Psoas muscle (tissue), 8 donors: ENCODE measurements at regions of chr9 and their contacts with region 1.

Region 1: DNA sequence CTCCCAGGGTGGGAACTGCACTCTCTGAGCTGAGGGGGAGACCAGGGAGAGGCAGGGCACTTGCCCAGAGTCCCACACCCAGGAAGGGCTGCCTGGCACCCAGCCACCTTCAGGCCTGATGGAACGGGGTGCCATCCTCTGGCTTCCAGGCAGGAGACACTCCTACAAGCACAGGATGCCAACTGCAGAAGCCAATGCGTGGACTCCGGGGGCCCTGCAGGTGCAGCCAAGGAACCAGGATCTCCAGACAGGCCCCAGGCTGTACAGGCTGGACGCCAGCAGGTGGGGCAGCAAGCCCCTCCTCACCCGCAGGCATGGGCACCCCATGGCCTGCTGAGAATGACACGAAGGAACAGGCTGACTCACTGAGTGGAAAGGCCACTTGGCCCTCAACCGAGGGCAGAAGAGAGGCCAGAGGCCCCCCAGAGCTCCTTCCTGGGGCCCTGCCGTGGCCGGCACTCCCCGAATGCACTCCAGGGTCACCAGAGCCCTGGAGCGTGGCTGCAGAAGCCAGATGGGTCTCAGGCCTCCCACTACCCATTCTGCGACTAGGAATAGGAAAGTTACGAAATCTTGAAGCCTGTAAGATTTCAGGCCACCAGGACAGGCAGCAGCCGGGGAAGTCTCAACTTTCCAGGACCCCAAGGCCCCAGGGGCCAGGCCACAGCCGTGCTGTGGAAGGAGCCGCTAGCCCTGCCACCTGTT is 15.7 kb downstream of the NACC2 start:
- DNase-seq: peak in 1 of 2 donors; percentile 66
- ATAC-seq: peak; percentile 12 to 64 (median 40)
- H3K4me3 ChIP-seq: peak overlapping the region; percentile 16
- H3K27ac ChIP-seq: peak overlapping the region; percentile 78
- H3K4me1 ChIP-seq: peaks cover 50% of the 10 kb centered on the region
- H3K27me3 ChIP-seq: no peaks in the 10 kb centered on the region
- CTCF ChIP-seq: no peak

Region 2: DNA sequence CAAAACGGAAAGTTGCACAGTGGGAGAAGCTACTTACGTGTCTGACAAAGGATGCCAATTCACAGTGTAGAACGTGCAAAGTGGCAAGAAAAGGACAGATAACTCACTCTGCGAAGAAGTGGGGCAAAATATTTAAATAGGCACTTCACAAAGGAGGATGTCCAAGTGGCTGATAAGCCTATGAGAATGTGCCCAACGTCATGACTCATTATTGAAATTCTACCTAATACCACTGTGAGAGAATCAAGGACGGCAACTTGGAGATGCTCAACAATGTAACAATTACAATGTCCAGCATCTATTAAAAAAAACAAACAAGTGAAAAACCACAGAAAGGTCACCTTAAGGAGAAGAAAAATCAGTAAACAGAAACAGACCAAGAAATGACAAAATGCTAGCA is 43.3 kb before region 1 on chr9:
- intact Hi-C with region 1: loop called (anchors 5 kb)
- DNase-seq: no peak
- ATAC-seq: peak in 2 of 4 donors; percentile 58 to 73
- H3K4me3 ChIP-seq: no peak overlapping the region
- H3K27ac ChIP-seq: no peak overlapping the region
- H3K4me1 ChIP-seq: peaks cover 12% of the 10 kb centered on the region
- H3K27me3 ChIP-seq: no peaks in the 10 kb centered on the region
- CTCF ChIP-seq: no peak

Region 3: GRCh38 chr9:136043441-136043991 is 35.8 kb before region 1 on chr9:
- intact Hi-C with region 1: loop called (anchors 5 kb)
- DNase-seq: no peak
- ATAC-seq: no peak
- H3K4me3 ChIP-seq: no peak overlapping the region
- H3K27ac ChIP-seq: no peak overlapping the region
- H3K4me1 ChIP-seq: peaks cover 13% of the 10 kb centered on the region
- H3K27me3 ChIP-seq: no peaks in the 10 kb centered on the region
- CTCF ChIP-seq: no peak